Pancreas (tissue), 10 donors: ENCODE measurements at regions of chr10 and their contacts with region 1.

Region 1: DNA sequence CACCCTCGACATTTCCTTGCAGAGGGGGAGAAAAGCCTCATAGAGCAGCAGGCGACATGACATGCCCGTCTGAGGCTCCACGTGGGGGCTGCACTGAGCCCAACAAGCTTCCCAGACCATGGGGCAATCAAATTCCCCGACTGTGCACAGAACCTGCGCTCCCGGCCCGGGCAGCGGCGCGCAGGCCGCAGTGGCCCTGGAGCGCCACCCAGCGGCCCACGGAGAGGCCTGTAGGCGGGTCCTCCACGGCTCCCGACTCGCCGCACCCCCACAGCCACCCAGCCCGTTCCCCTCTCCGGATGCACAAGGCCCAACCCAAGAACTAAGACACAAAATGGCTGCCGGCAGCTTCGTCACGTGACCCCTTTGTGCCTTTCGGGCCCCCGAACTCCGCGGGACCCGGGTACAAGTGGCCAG is 816 bp downstream of the EPC1 start:
- DNase-seq: peak; percentile 93 to 97 (median 96)
- ATAC-seq: peak; percentile 93 to 98 (median 94)
- H3K4me3 ChIP-seq: peak overlapping the region; percentile 52 to 94 (median 82)
- H3K27ac ChIP-seq: peak overlapping the region; percentile 100
- H3K4me1 ChIP-seq: peaks cover 6 to 40% (median 27%) of the 10 kb centered on the region in 3 donors
- H3K27me3 ChIP-seq: no peaks in the 10 kb centered on the region
- CTCF ChIP-seq: peak; percentile 94 to 98 (median 97)

Region 2: DNA sequence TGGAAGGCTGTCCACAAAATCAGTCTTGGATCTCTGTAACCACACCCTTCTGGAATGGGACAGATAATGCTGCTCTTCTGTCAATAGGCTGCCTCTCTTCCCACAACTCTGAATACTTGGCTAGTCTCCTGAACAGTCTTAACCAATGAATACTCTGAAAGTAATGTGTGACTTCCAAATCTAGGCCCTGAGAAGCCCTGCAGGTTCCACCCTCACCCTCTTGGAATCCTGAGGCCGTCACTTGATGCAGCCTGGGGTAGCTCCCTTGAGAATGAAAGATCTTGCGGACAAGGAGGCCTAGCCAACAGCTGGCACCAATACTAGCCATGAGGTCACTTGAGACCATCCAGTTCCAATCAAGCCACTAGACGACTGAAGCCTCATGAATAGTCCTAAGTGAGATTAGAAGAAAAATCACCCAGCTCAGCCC is 526.7 kb before region 1 on chr10:
- intact Hi-C with region 1: no loop called
- DNase-seq: no peak
- ATAC-seq: peak in 1 of 4 donors; percentile 54
- H3K4me3 ChIP-seq: no peak overlapping the region
- H3K27ac ChIP-seq: no peak overlapping the region
- H3K4me1 ChIP-seq: peaks cover 0 to 8% (median 0%) of the 10 kb centered on the region in 3 donors
- H3K27me3 ChIP-seq: no peaks in the 10 kb centered on the region
- CTCF ChIP-seq: no peak

Region 3: GRCh38 chr10:32207544-32207943 is 138.6 kb before region 1 on chr10:
- intact Hi-C with region 1: no loop called
- DNase-seq: peak; percentile 39 to 68 (median 64)
- ATAC-seq: peak; percentile 75 to 94 (median 88)
- H3K4me3 ChIP-seq: no peak overlapping the region
- H3K27ac ChIP-seq: no peak overlapping the region
- H3K4me1 ChIP-seq: no peaks in the 10 kb centered on the region
- H3K27me3 ChIP-seq: no peaks in the 10 kb centered on the region
- CTCF ChIP-seq: peak; percentile 34 to 64 (median 56)

Region 4: GRCh38 chr10:32256613-32257437 is 89.3 kb before region 1 on chr10:
- intact Hi-C with region 1: loop called in 1 of 3 experiments (anchors 5 kb)
- DNase-seq: peak in 5 of 6 donors; percentile 25 to 76 (median 49)
- ATAC-seq: peak; percentile 81 to 96 (median 90)
- H3K4me3 ChIP-seq: no peak overlapping the region
- H3K27ac ChIP-seq: no peak overlapping the region
- H3K4me1 ChIP-seq: no peaks in the 10 kb centered on the region
- H3K27me3 ChIP-seq: no peaks in the 10 kb centered on the region
- CTCF ChIP-seq: peak; percentile 49 to 86 (median 65)